Aorta (tissue), 5 donors: ENCODE measurements at regions of chr1 and their contacts with region 1.

Region 1: GRCh38 chr1:90133133-90133532 is 138.2 kb downstream of the ZNF326 start:
- DNase-seq: no peak
- ATAC-seq: peak; percentile 72
- H3K4me3 ChIP-seq: no peak overlapping the region
- H3K27ac ChIP-seq: no peak overlapping the region
- H3K4me1 ChIP-seq: peaks cover 1 to 5% of the 10 kb centered on the region in 2 donors
- H3K27me3 ChIP-seq: no peaks in the 10 kb centered on the region

Region 2: GRCh38 chr1:90114521-90115141 is 18.5 kb before region 1 on chr1:
- intact Hi-C with region 1: no loop called
- DNase-seq: no peak
- ATAC-seq: no peak
- H3K4me3 ChIP-seq: no peak overlapping the region
- H3K27ac ChIP-seq: no peak overlapping the region
- H3K4me1 ChIP-seq: no peaks in the 10 kb centered on the region
- H3K27me3 ChIP-seq: no peaks in the 10 kb centered on the region

Region 3: GRCh38 chr1:90187323-90187585 is 54.1 kb after region 1 on chr1:
- intact Hi-C with region 1: no loop called
- DNase-seq: no peak
- ATAC-seq: no peak
- H3K4me3 ChIP-seq: no peak overlapping the region
- H3K27ac ChIP-seq: no peak overlapping the region
- H3K4me1 ChIP-seq: no peaks in the 10 kb centered on the region
- H3K27me3 ChIP-seq: no peaks in the 10 kb centered on the region

Region 4: DNA sequence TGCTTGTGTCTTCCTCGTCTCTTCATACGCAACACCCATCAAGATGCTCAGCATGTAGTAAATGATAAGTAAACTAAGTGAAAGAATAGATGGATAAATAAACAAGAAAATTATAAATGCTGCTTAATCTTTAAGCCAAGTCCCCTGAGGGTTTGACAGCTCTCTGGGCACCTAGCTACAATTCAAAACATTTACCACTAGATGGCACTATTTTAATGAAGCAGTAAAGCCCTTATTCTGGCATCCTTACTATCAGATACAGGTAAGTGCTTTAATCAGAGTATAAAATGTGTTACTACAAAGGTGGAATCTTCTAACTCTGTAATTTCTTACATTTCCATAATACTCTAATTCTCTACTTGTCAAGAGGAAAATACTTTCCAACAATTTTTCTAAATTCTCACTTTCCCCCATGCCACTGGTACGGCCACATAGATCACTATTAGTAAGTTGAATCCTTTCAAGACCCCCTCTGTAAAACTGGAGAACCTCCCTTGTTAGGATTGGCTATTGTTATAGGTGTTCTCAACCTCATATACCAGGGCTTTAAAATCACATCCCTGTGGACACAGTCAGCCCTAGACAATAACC is 446.2 kb after region 1 on chr1:
- intact Hi-C with region 1: loop called in 1 of 2 experiments (anchors 10 kb)
- DNase-seq: no peak
- ATAC-seq: no peak
- H3K4me3 ChIP-seq: no peak overlapping the region
- H3K27ac ChIP-seq: no peak overlapping the region
- H3K4me1 ChIP-seq: peaks cover 3 to 6% of the 10 kb centered on the region in 2 donors
- H3K27me3 ChIP-seq: no peaks in the 10 kb centered on the region

Region 5: DNA sequence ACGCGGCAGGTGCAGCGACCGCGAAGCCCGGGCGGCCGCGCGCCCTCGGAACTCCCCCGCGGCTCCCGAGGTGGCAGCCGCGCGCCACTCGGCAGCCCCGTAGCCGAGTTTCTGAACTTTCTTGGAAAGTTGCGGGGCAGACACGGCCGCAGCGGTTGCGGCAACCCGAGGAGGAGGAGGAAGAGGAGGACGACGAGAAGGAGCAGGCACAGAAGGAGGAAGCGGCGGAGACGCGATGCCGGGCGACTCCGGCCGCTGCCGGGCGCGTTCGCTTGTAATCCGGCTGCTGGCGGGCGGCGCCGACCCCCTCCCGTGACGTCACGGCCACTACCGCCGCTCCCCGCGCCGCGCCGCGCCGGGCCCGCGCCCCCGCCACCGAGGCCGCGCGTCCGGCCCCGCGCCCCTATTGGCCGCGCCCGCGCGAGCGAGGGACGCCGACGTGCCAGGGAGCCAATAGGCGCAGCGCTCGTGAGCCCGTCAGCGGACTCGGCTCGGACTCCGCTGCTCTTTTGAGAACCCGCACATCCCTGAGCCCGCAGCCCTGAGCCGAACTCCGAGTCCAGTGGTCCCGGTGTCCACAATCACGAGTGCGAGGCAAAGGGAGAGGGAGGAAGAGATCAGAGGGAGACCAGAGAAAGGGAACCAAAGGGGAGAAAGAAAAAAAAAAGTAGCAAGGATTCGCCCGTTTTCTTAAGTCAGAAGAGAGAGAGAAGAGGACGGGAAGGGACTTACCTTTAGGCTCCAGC is 584.7 kb after region 1 on chr1:
- intact Hi-C with region 1: loop called in 1 of 2 experiments (anchors 10 kb)
- DNase-seq: peak in 1 of 2 donors; percentile 80
- ATAC-seq: no peak
- H3K4me3 ChIP-seq: peak overlapping the region; percentile 11 to 42
- H3K27ac ChIP-seq: no peak overlapping the region
- H3K4me1 ChIP-seq: no peaks in the 10 kb centered on the region
- H3K27me3 ChIP-seq: peaks cover 0 to 2% of the 10 kb centered on the region in 2 donors

Region 6: DNA sequence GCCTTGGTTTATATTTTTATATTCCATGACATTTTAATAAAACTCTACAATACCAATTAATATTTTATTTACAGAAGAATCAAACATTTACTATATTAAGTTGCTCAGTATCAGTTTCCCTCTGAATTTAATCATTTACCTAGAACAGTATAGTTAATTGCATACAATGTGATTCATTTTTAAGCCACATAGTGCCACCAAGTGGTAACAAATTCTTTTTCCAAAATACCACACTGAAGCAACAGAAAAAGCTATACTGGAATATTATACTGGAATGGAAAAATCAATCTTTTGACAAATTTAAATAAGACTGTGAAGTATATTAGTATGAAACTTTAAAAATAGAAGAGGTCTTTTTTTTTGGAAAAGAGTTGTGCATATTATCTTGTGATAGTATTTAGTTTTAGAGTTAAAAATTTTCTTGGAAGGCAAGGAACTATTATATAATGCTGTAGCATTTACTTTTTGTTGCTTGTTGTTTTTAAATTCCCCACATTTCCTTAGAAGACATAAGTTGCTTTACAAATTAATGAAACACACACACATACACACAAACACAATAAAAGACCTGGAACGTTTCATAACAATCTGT is 831.4 kb after region 1 on chr1:
- intact Hi-C with region 1: loop called in 1 of 2 experiments (anchors 10 kb)
- DNase-seq: no peak
- ATAC-seq: no peak
- H3K4me3 ChIP-seq: no peak overlapping the region
- H3K27ac ChIP-seq: no peak overlapping the region
- H3K4me1 ChIP-seq: peaks cover 0 to 2% of the 10 kb centered on the region in 2 donors
- H3K27me3 ChIP-seq: no peaks in the 10 kb centered on the region